ENCODE measurements at regions of chr1 and their contacts with region 1.

Region 1: GRCh38 chr1:167268398-167268787 is 47.7 kb downstream of the POU2F1 start:
- DNase-seq: no peak
- ATAC-seq: no peak
- H3K4me3 ChIP-seq: no peak overlapping the region
- H3K4me3 Mint-ChIP-seq: no peak overlapping the region
- H3K27ac ChIP-seq: no peak overlapping the region
- H3K27ac Mint-ChIP-seq: peak overlapping the region; percentile 52 to 54
- H3K4me1 ChIP-seq: peaks cover 4% of the 10 kb centered on the region
- H3K4me1 Mint-ChIP-seq: peaks cover 11 to 14% of the 10 kb centered on the region in 2 donors
- H3K27me3 ChIP-seq: no peaks in the 10 kb centered on the region
- H3K27me3 Mint-ChIP-seq: no peaks in the 10 kb centered on the region
- CTCF ChIP-seq: no peak

Region 2: DNA sequence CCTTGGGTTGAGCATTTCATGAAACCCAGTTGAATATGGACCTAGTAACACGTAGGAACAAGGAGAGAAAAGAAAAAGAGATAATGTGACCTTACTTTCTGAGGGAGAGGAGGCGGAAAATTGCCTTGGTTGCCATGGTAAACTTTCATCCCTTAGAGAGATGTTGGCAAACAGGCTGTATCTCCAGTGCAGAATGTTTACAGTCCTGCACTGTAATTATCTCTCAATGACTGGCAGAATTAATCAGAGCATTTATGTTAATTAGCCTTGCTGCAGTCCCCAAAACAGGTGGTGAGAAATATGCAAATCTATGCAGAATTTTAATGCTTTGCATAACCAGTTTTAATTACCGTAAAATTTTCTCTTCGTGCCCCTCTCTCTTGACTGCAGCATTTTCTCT is 102.6 kb after region 1 on chr1:
- intact Hi-C with region 1: no loop called
- DNase-seq: no peak
- ATAC-seq: no peak
- H3K4me3 ChIP-seq: no peak overlapping the region
- H3K4me3 Mint-ChIP-seq: no peak overlapping the region
- H3K27ac ChIP-seq: no peak overlapping the region
- H3K27ac Mint-ChIP-seq: no peak overlapping the region
- H3K4me1 ChIP-seq: no peaks in the 10 kb centered on the region
- H3K4me1 Mint-ChIP-seq: no peaks in the 10 kb centered on the region
- H3K27me3 ChIP-seq: no peaks in the 10 kb centered on the region
- H3K27me3 Mint-ChIP-seq: no peaks in the 10 kb centered on the region
- CTCF ChIP-seq: no peak

Region 3: DNA sequence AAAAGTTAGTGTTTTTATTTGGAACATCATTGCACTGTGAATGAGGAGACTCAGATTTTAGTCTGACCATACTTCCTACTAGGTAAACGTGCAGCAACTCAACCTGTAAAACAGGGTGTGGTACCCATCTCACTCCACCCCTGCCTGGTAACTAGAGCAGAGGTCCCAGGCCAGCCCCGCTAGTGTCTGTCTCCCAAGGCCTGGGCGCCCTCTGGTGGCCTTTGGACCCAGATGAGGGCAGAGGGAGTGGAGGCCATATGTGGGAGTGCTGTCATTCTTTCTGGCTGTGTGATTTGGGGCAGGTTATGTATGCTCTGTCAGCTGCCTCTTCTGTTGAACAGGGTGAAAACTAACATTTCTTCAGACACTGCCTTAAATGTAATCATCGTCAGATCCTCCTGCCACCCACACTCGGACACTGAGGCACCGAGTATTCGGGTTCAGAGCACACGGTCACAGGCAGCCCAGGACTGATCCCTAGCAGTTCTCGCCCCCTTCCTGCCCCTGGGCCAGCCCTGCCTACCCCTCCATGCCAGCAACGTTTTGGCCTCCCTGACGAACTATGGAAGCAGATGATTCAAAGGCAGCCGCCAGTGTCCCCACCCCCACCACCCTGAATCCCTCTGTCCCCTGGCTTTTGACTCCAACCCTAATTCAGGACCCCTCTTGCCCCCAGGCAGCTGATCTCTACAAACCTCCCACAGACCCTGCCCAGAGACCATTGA is 173.9 kb after region 1 on chr1:
- intact Hi-C with region 1: loop called (anchors 5 kb)
- DNase-seq: peak; percentile 83 to 92
- ATAC-seq: peak; percentile 47 to 76 (median 63)
- H3K4me3 ChIP-seq: no peak overlapping the region
- H3K4me3 Mint-ChIP-seq: peak overlapping the region; percentile 78
- H3K27ac ChIP-seq: peak overlapping the region; percentile 86
- H3K27ac Mint-ChIP-seq: peak overlapping the region; percentile 91 to 100
- H3K4me1 ChIP-seq: peaks cover 94% of the 10 kb centered on the region
- H3K4me1 Mint-ChIP-seq: peaks cover 87 to 94% of the 10 kb centered on the region in 2 donors
- H3K27me3 ChIP-seq: no peaks in the 10 kb centered on the region
- H3K27me3 Mint-ChIP-seq: no peaks in the 10 kb centered on the region
- CTCF ChIP-seq: peak; percentile 79

Region 4: GRCh38 chr1:167456926-167457325 is 188.5 kb after region 1 on chr1:
- intact Hi-C with region 1: no loop called
- DNase-seq: peak in 1 of 2 donors; percentile 16
- ATAC-seq: no peak
- H3K4me3 ChIP-seq: no peak overlapping the region
- H3K4me3 Mint-ChIP-seq: peak overlapping the region; percentile 87
- H3K27ac ChIP-seq: peak overlapping the region; percentile 98
- H3K27ac Mint-ChIP-seq: peak overlapping the region; percentile 91 to 100
- H3K4me1 ChIP-seq: peaks cover 77% of the 10 kb centered on the region
- H3K4me1 Mint-ChIP-seq: peaks cover 56 to 66% of the 10 kb centered on the region in 2 donors
- H3K27me3 ChIP-seq: no peaks in the 10 kb centered on the region
- H3K27me3 Mint-ChIP-seq: no peaks in the 10 kb centered on the region
- CTCF ChIP-seq: no peak

Region 5: DNA sequence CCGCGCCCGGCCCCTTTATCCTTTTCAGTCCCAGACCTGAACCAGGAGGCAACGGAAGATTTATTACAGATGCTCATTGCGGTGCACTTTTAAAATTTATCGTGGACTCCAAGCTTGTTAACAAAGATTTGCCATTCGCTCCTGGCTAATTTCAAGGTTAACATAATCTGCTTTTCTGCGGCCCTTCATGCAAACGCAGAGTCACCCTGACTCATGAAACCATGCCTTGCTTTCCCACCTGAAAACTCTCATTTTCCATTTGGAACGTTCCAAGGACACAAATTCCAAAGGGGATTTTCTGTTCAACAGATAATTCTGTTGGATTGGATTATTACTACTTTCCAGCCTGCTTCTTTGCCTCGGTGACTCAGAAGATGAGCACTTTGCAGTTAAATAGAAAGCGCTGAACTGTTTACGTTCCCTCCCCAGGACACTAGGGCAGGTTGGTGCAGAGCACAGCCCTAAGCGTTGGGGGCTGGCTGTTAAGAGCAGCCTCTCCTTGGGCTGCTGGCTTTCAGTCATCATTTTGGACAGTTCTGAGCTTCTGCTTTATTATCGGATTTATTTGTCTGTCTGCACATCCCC is 198.8 kb after region 1 on chr1:
- intact Hi-C with region 1: no loop called
- DNase-seq: no peak
- ATAC-seq: peak; percentile 66 to 79 (median 74)
- H3K4me3 ChIP-seq: no peak overlapping the region
- H3K4me3 Mint-ChIP-seq: peak overlapping the region; percentile 83
- H3K27ac ChIP-seq: peak overlapping the region; percentile 75
- H3K27ac Mint-ChIP-seq: peak overlapping the region; percentile 91 to 100
- H3K4me1 ChIP-seq: peaks cover 64% of the 10 kb centered on the region
- H3K4me1 Mint-ChIP-seq: peaks cover 86% of the 10 kb centered on the region in 2 donors
- H3K27me3 ChIP-seq: no peaks in the 10 kb centered on the region
- H3K27me3 Mint-ChIP-seq: no peaks in the 10 kb centered on the region
- CTCF ChIP-seq: no peak

Region 6: GRCh38 chr1:167533851-167534300 is 265.5 kb after region 1 on chr1:
- intact Hi-C with region 1: loop called (anchors 5 kb)
- DNase-seq: peak; percentile 65 to 84
- ATAC-seq: peak; percentile 87 to 99 (median 96)
- H3K4me3 ChIP-seq: no peak overlapping the region
- H3K4me3 Mint-ChIP-seq: no peak overlapping the region
- H3K27ac ChIP-seq: no peak overlapping the region
- H3K27ac Mint-ChIP-seq: peak overlapping the region in 1 of 2 donors; percentile 22
- H3K4me1 ChIP-seq: peaks cover 6% of the 10 kb centered on the region
- H3K4me1 Mint-ChIP-seq: no peaks in the 10 kb centered on the region
- H3K27me3 ChIP-seq: no peaks in the 10 kb centered on the region
- H3K27me3 Mint-ChIP-seq: no peaks in the 10 kb centered on the region
- CTCF ChIP-seq: peak; percentile 91